H1 (cell line): ENCODE measurements at regions of chr1 and their contacts with region 1.

Region 1: GRCh38 chr1:203172128-203173010 is 3.3 kb downstream of the MYBPH start:
- DNase-seq: peak; percentile 68 to 92
- H3K4me3 ChIP-seq: no peak overlapping the region
- H3K27ac ChIP-seq: no peak overlapping the region
- H3K4me1 ChIP-seq: peaks cover 0 to 7% (median under 1%) of the 10 kb centered on the region in 4 experiments; a peak in 3 of 7 replicates
- H3K27me3 ChIP-seq: no peaks in the 10 kb centered on the region
- CTCF ChIP-seq: peak; percentile 97 to 99 (median 97)
- EP300 ChIP-seq: no peak
- POLR2A ChIP-seq: no peak
- RAD21 ChIP-seq: peak; percentile 82 to 90

Region 2: DNA sequence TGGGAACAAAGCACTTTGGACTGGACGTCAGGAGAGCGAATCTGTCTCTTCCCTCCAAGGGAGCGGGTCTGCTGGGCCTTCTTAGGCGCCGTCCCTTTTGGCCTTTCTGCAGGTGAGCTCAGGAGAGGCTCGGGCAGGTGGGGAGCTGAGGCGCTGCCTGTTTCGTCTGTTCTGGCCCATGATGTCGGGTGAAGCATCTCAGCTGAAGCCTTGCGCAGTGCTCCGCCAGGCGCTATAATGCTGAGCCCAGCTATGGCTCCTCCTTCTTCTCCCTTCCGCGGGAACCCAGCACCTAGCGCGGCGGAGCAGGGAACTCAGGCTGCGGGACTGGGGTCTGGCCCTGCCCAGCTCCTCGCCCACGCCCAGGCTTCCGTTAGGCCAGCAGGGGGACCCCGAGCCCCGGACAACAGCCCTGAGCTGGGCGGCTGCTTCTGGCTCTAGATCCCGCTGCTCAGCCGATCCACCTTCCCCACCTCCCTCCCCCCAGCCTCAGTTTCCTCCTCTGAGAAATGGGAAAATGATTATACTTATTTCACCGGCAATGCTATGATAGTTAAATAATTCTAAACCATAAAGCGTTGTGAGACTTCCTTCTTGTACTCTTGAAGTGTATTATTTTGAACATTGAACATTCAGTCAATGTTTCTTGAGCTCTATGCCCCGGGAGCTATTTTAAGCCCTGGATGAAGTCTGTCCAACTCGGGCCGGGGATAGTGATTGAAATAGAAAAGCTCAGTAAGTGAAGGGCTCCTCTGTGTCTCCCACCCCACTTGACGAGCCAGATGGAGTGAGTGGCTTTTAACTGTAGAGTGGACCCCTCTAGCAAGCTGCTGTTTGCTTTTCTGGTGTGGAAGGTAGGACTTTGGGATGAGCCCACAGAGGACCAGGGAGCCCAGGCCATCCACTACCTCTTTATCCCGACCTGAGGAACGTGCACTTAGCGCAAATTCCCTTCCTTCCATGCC is 54.5 kb before region 1 on chr1:
- CTCF ChIA-PET with region 1: interaction called, 511 read pairs
- POLR2A ChIA-PET with region 1: interaction called, 3 read pairs
- DNase-seq: peak; percentile 76 to 93
- H3K4me3 ChIP-seq: peak overlapping the region in 3 of 4 experiments; percentile 25 to 43 (median 32); a peak in 4 of 8 replicates
- H3K27ac ChIP-seq: no peak overlapping the region
- H3K4me1 ChIP-seq: peaks cover 0 to 2% (median under 1%) of the 10 kb centered on the region in 4 experiments; a peak in 1 of 7 replicates
- H3K27me3 ChIP-seq: peaks cover 0 to 6% (median 3%) of the 10 kb centered on the region in 4 experiments; a peak in 4 of 7 replicates
- CTCF ChIP-seq: peak; percentile 83 to 97 (median 92)
- EP300 ChIP-seq: peak in 1 of 2 experiments; percentile 29; a peak in 1 of 3 replicates
- POLR2A ChIP-seq: no peak
- RAD21 ChIP-seq: peak; percentile 98

Region 3: GRCh38 chr1:203158960-203159665 is 13.3 kb before region 1 on chr1:
- CTCF ChIA-PET with region 1: interaction called, 140 read pairs
- POLR2A ChIA-PET with region 1: no interaction called
- DNase-seq: no peak
- H3K4me3 ChIP-seq: no peak overlapping the region
- H3K27ac ChIP-seq: no peak overlapping the region
- H3K4me1 ChIP-seq: peaks cover 0 to 6% (median 2%) of the 10 kb centered on the region in 4 experiments; a peak in 3 of 7 replicates
- H3K27me3 ChIP-seq: no peaks in the 10 kb centered on the region; a peak in 1 of 7 replicates
- CTCF ChIP-seq: no peak
- EP300 ChIP-seq: no peak
- POLR2A ChIP-seq: no peak
- RAD21 ChIP-seq: no peak

Region 4: DNA sequence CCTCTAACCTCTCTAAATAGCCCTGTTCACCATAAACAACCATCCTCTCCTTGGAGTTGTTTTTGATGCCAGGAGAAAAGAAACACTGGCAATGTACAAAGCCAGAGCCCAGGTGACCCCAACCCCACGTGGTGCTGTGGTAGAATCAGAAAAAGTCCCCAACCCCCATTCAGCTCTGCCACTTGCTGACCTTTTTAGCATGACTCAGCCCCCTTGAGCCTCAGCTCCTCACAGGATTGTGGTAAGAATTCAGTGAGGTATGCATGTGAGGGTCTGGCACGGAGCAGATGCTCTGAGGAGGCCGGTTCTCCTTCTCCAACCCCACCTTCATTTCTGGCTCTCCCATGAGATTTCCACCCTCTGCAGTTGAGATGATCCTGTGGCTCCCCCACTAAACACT is 25.3 kb after region 1 on chr1:
- CTCF ChIA-PET with region 1: interaction called, 28 read pairs
- POLR2A ChIA-PET with region 1: no interaction called
- DNase-seq: no peak
- H3K4me3 ChIP-seq: no peak overlapping the region
- H3K27ac ChIP-seq: no peak overlapping the region
- H3K4me1 ChIP-seq: peaks cover 0 to 3% (median 0%) of the 10 kb centered on the region in 4 experiments; a peak in 1 of 7 replicates
- H3K27me3 ChIP-seq: no peaks in the 10 kb centered on the region; a peak in 1 of 7 replicates
- CTCF ChIP-seq: no peak
- EP300 ChIP-seq: no peak
- POLR2A ChIP-seq: no peak
- RAD21 ChIP-seq: no peak

Region 5: GRCh38 chr1:203229471-203230135 is 57.2 kb after region 1 on chr1 and contains the start of gene CHIT1:
- CTCF ChIA-PET with region 1: interaction called, 10 read pairs
- POLR2A ChIA-PET with region 1: interaction called, 3 read pairs
- DNase-seq: no peak
- H3K4me3 ChIP-seq: no peak within 1 kb of the TSS
- H3K27ac ChIP-seq: no peak within 1 kb of the TSS
- H3K4me1 ChIP-seq: no peaks in the 10 kb centered on the region
- H3K27me3 ChIP-seq: no peaks in the 10 kb centered on the region
- CTCF ChIP-seq: no peak
- EP300 ChIP-seq: no peak
- POLR2A ChIP-seq: no peak
- RAD21 ChIP-seq: no peak
- total RNA-seq, gene CHIT1: not detected in 2 replicates

Region 6: GRCh38 chr1:203316626-203317093 is 144.3 kb after region 1 on chr1:
- CTCF ChIA-PET with region 1: no interaction called
- POLR2A ChIA-PET with region 1: no interaction called
- DNase-seq: no peak
- H3K4me3 ChIP-seq: no peak overlapping the region
- H3K27ac ChIP-seq: no peak overlapping the region
- H3K4me1 ChIP-seq: peaks cover 2 to 7% (median 2%) of the 10 kb centered on the region in 4 experiments; a peak in 4 of 7 replicates
- H3K27me3 ChIP-seq: peaks cover 0 to 48% (median 20%) of the 10 kb centered on the region in 4 experiments; a peak in 6 of 7 replicates
- CTCF ChIP-seq: no peak
- EP300 ChIP-seq: no peak
- POLR2A ChIP-seq: no peak
- RAD21 ChIP-seq: no peak